ENCODE measurements at regions of chr5 and their contacts with region 1.

Region 1: DNA sequence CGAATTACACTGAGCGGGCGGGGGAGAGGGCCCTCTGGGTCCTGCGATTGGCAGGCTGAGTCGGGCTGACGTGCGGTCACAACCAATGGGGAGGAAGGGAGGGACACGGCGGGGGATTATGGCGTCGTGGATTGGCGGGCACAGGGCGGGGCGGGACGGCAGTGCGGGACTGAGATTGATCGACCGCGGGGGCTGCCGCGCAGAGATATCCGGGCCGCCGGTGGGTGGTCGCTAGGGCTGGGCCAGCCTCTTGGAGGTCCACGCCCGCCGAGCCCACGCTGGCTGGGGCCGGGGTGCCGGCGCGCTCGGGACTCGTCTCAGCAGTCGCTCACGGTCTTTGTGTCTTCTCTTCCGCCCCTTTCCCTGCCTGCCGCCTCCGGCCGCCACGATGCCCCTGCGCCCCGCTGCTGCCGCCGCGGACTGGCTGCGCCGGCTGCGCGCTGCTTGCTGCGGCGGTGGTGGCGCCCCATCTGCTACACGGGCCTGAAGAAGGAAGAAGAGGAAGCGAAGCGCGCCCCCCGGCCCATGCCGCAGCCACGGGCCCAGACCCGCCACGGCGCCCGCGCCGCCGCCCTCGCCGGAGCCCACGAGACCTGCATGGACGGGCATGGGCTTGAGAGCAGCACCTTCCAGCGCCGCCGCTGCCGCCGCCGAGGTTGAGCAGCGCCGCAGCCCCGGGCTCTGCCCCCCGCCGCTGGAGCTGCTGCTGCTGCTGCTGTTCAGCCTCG is at the start of gene RGMB:
- DNase-seq: peak; percentile 94
- ATAC-seq: peak; percentile 90
- H3K4me3 ChIP-seq: peak within 1 kb of the TSS; percentile 71 to 90
- H3K27ac ChIP-seq: peak within 1 kb of the TSS; percentile 89
- H3K4me1 ChIP-seq: peaks cover 29% of the 10 kb centered on the region
- H3K27me3 ChIP-seq: no peaks in the 10 kb centered on the region
- CTCF ChIP-seq: peak; percentile 34
- total RNA-seq, gene RGMB: 25.4 TPM

Region 2: DNA sequence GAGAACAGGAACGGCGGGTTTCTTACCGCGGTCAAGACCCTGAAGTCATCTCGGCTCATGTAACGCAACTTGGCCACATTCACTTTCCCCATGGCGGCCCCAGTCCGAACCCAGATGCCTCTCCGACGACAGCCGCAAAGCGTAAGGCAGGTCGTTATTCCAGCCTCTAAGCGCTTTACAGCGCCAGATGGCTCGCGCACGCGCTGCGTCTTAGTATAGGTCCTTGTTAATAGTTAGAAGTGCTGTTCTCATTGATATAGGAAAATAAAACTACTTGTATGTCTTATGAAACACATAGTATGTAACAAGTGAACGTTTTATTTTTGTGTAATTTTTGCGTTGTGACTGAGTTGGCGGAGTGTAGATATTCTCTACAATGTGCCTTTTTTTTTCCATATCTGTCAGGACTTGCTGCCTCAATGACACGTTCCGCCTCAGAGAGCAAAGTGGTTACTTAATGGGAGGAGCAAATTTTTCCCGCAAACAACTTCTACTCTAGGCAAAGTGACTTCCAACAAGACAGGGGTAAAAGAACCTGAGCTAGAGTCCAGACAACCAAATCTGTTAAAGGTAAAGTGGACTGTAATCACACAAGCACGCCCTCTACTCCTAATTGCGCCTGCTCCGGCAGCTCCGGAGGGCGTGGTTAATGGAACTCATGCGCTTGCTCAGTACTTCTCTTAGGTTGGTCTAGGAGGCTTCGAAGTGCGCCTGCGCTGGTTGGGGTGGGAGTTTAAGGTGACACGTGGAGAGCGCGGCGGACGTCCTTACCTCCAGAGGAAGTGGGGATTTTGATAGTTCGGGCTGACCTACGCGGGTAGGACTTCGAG is 1590.3 kb before region 1 on chr5 and contains the start of gene RIOK2:
- CTCF ChIA-PET with region 1: no interaction called
- POLR2A ChIA-PET with region 1: no interaction called
- in situ Hi-C with region 1: no loop called
- intact Hi-C with region 1: loop called (anchors 5 kb)
- DNase-seq: peak; percentile 99
- ATAC-seq: peak; percentile 96
- H3K4me3 ChIP-seq: peak within 1 kb of the TSS; percentile 98 to 100
- H3K27ac ChIP-seq: peak within 1 kb of the TSS; percentile 96
- H3K4me1 ChIP-seq: peaks cover 9% of the 10 kb centered on the region; the same call in 1 of the 2 replicates
- H3K27me3 ChIP-seq: no peaks in the 10 kb centered on the region
- CTCF ChIP-seq: no peak
- total RNA-seq, gene RIOK2: 32.5 TPM

Region 3: GRCh38 chr5:97534166-97534565 is 1239.5 kb before region 1 on chr5:
- CTCF ChIA-PET with region 1: interaction called, 4 read pairs
- POLR2A ChIA-PET with region 1: no interaction called
- in situ Hi-C with region 1: no loop called
- intact Hi-C with region 1: loop called (anchors 10 kb)
- DNase-seq: peak; percentile 85
- ATAC-seq: peak; percentile 78
- H3K4me3 ChIP-seq: no peak overlapping the region
- H3K27ac ChIP-seq: no peak overlapping the region
- H3K4me1 ChIP-seq: no peaks in the 10 kb centered on the region
- H3K27me3 ChIP-seq: no peaks in the 10 kb centered on the region
- CTCF ChIP-seq: peak; percentile 74

Region 4: DNA sequence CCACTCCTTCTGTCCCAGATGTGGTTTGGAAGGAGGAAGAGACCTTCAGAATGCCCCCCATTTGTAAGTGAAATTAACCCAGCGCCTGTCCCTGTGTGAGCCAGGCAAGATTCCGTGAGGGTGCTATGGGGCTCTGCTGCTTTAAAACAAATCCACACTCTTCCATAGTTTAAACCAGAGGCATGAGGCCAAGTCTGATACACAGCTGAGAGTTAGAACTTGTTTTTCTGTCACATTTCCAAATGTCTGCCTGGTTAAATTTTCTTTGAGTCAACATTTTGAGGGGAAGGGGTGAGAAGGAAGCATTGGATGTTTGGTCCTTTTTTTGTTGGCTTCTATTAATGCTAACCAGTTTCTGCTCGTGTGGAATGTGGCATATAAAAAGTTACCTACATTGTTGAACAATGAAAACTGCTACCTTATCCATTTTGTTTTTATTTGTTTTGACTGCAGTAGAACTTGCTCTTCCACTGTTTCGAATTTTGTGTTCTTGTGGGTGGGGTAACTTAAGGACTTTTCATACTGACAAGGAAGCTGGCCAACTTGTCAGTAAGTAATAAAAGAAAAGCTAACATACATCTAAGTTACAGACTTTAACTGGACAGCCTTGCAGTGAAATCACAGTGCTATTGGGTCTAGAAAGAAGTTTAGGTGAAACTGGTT is 12.7 kb after region 1 on chr5:
- CTCF ChIA-PET with region 1: no interaction called
- POLR2A ChIA-PET with region 1: no interaction called
- in situ Hi-C with region 1: no loop called
- intact Hi-C with region 1: no loop called
- DNase-seq: no peak
- ATAC-seq: no peak
- H3K4me3 ChIP-seq: no peak overlapping the region
- H3K27ac ChIP-seq: no peak overlapping the region
- H3K4me1 ChIP-seq: peaks cover 5% of the 10 kb centered on the region; the same call in 1 of the 2 replicates
- H3K27me3 ChIP-seq: no peaks in the 10 kb centered on the region
- CTCF ChIP-seq: no peak

Region 5: DNA sequence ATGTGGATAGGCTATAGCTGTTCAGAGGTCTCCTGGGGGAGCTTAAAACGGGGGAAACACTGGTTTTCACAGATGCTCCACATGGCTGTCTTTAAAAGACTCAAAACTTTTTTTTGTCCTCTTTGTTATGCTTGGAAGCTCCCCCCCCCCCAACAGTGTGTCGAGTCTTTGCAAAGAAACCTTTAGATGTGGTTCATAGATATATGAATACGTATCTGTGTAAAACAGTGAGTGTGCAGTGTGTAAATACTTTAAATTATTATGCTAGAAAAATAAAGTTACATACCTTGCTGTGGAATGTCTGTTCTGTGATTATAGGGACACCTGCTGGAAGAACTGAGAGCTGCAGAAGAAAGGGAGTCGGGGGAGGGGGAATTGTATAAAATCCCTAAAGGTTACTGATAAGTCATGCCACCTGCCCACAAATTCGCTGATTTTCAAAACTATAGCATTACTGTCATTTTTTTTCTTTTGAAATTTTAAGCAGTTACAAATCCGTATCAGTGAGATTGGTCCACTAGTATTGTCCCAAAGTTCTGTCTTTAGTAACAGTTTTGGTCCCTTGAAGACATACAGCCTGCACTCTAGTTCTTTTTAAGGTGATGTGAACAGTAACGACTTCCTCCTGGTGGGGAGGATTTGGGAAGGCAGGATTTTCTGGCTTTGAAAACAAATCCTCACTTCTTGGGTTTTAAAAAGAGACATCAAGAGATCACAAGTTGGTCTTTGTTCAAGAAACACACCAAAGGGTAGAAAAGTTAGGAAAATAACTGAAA is 22.8 kb after region 1 on chr5:
- CTCF ChIA-PET with region 1: interaction called, 14 read pairs
- POLR2A ChIA-PET with region 1: interaction called, 13 read pairs
- in situ Hi-C with region 1: no loop called
- intact Hi-C with region 1: no loop called
- DNase-seq: peak; percentile 54
- ATAC-seq: peak; percentile 83
- H3K4me3 ChIP-seq: no peak overlapping the region
- H3K27ac ChIP-seq: no peak overlapping the region; the same call in 1 of the 2 replicates
- H3K4me1 ChIP-seq: peaks cover 10% of the 10 kb centered on the region
- H3K27me3 ChIP-seq: no peaks in the 10 kb centered on the region
- CTCF ChIP-seq: peak; percentile 82

Region 6: DNA sequence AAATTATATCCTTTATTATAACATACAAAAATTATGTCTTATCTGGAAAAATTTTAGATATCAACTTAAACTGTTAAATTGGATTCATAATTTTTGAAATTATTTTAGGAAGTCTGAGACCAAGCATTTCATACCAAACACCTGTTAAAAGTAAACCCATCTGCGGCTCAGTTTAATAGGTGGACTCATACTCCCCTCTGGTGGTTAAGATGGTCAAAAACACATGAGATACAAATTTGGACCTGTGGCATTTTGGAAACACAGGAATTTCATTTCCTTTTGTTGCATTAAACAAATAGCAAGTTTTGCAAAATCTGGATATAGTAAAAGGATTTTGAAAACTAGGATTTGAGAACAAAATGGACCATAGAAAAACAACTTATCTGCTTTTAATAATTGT is 53.5 kb after region 1 on chr5:
- CTCF ChIA-PET with region 1: no interaction called
- POLR2A ChIA-PET with region 1: no interaction called
- in situ Hi-C with region 1: no loop called
- intact Hi-C with region 1: loop called (anchors 5 kb)
- DNase-seq: peak; percentile 41
- ATAC-seq: peak; percentile 74; the same call in 1 of the 2 replicates
- H3K4me3 ChIP-seq: no peak overlapping the region
- H3K27ac ChIP-seq: no peak overlapping the region
- H3K4me1 ChIP-seq: no peaks in the 10 kb centered on the region
- H3K27me3 ChIP-seq: no peaks in the 10 kb centered on the region
- CTCF ChIP-seq: peak; percentile 65; the same call in 1 of the 2 replicates

Measured in Panc1 (cell line).